ENCODE measurements at regions of chr10 and their contacts with region 1.

Region 1: DNA sequence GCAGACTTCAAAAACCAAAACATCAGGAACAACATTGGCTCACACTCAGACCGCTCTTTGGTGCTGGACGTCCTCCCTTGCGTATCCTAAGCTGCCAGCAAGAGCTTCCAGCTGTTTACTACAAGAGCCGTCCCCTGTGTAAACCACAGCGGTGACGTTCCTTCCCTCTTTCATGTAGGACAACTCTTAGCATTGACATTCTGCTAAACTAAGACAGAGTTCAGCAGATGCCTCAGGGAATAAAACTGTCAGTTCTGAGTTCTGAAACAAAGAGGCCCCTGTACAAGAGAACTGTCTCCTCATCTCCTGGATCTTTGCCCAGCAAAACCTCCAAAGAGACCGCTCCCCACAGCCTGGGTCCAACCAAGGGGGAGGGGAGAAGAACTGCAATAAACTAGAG is 57.8 kb upstream of the OPALIN start:
- DNase-seq: no peak
- ATAC-seq: no peak
- H3K4me3 ChIP-seq: no peak overlapping the region
- H3K27ac ChIP-seq: no peak overlapping the region
- H3K4me1 ChIP-seq: no peaks in the 10 kb centered on the region
- H3K27me3 ChIP-seq: peaks cover 0 to 34% of the 10 kb centered on the region in 2 experiments; a peak in 3 of 5 replicates
- CTCF ChIP-seq: no peak
- EP300 ChIP-seq: no peak
- POLR2A ChIP-seq: no peak
- RAD21 ChIP-seq: no peak

Region 2: GRCh38 chr10:96456296-96456840 is 39.7 kb after region 1 on chr10:
- CTCF ChIA-PET with region 1: no interaction called
- POLR2A ChIA-PET with region 1: no interaction called
- in situ Hi-C with region 1: loop called (anchors 5 kb)
- intact Hi-C with region 1: no loop called
- DNase-seq: no peak
- ATAC-seq: no peak
- H3K4me3 ChIP-seq: no peak overlapping the region
- H3K27ac ChIP-seq: no peak overlapping the region
- H3K4me1 ChIP-seq: no peaks in the 10 kb centered on the region
- H3K27me3 ChIP-seq: peaks cover 4 to 20% of the 10 kb centered on the region in 2 experiments
- CTCF ChIP-seq: no peak
- EP300 ChIP-seq: no peak
- POLR2A ChIP-seq: no peak
- RAD21 ChIP-seq: no peak

Region 3: GRCh38 chr10:97400665-97401454 is 984.2 kb after region 1 on chr10 and contains the start of gene RRP12:
- CTCF ChIA-PET with region 1: no interaction called
- POLR2A ChIA-PET with region 1: no interaction called
- in situ Hi-C with region 1: no loop called
- intact Hi-C with region 1: no loop called
- DNase-seq: peak; percentile 87 to 96 (median 90)
- ATAC-seq: peak; percentile 92
- H3K4me3 ChIP-seq: peak within 1 kb of the TSS; percentile 83
- H3K27ac ChIP-seq: peak within 1 kb of the TSS; percentile 82
- H3K4me1 ChIP-seq: peaks cover 3% of the 10 kb centered on the region in 2 experiments; a peak in 3 of 5 replicates
- H3K27me3 ChIP-seq: no peaks in the 10 kb centered on the region
- CTCF ChIP-seq: peak; percentile 9 to 34 (median 14); a peak in 1 of 6 replicates
- EP300 ChIP-seq: no peak
- POLR2A ChIP-seq: peak; percentile 72
- RAD21 ChIP-seq: no peak
- polyA plus RNA-seq, gene RRP12: 4.6 to 6.1 TPM